CD4-positive, alpha-beta memory T cell (primary cell): ENCODE measurements at regions of chr5 and their contacts with region 1.

Region 1: DNA sequence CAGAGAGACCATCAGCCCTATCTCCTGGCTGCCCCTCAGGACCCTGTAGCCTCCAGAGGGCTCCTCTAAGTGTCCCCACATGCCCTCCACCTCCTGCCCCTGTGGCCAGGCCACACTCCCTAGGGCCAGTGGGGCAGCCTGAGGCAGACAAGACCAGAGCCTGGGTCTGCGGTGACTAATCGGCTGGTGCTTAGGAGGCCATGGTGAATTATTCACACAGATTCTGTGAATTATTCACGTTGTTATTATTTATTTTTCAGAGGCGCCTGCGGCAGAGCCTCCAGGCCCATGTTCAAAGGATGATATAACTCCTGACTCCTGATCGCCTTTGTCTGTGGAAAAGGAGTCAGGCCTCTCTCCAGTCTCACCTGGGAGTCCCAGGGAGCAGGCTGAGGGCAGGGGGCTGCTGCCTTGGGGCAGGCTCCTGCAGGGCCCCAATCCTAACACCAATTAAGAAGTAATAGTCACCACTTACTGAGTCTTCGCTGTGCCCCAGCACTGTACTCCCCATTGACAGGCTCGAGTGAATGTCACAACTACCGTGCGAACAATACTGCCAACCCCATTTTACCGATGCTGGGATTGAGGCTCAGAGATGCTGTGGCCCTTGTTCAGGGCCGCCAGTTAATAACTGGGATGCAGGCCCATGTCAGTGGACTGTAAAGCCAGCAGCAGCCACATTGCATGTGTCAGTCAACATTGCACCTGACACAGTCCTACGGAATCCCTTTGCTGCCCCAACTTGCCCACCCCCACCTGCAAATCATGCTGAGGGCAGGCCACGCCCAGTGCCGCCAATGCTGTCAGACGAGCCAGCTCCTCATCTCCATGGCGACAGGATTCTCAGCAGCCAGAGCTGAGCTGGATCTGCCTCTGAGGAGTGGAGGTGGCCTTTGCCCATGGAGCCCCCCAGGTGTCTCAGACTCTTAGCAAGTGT is 94.9 kb downstream of the PCDH1 start:
- DNase-seq: no peak
- H3K4me3 ChIP-seq: no peak overlapping the region
- H3K4me3 Mint-ChIP-seq: no peak overlapping the region
- H3K27ac ChIP-seq: no peak overlapping the region
- H3K27ac Mint-ChIP-seq: no peak overlapping the region
- H3K4me1 ChIP-seq: no peaks in the 10 kb centered on the region
- H3K4me1 Mint-ChIP-seq: no peaks in the 10 kb centered on the region
- H3K27me3 ChIP-seq: peaks cover 8% of the 10 kb centered on the region
- H3K27me3 Mint-ChIP-seq: peaks cover 3 to 20% of the 10 kb centered on the region in 2 donors

Region 2: GRCh38 chr5:141623186-141623585 is 160.1 kb before region 1 on chr5:
- CTCF ChIA-PET with region 1: no interaction called
- POLR2A ChIA-PET with region 1: no interaction called
- intact Hi-C with region 1: no loop called
- DNase-seq: no peak
- H3K4me3 ChIP-seq: no peak overlapping the region
- H3K4me3 Mint-ChIP-seq: peak overlapping the region in 1 of 8 donors; percentile 54
- H3K27ac ChIP-seq: no peak overlapping the region
- H3K27ac Mint-ChIP-seq: peak overlapping the region in 6 of 7 donors; percentile 53 to 89 (median 71)
- H3K4me1 ChIP-seq: peaks cover 15% of the 10 kb centered on the region
- H3K4me1 Mint-ChIP-seq: peaks cover 11 to 19% (median 18%) of the 10 kb centered on the region in 4 donors
- H3K27me3 ChIP-seq: no peaks in the 10 kb centered on the region
- H3K27me3 Mint-ChIP-seq: no peaks in the 10 kb centered on the region

Region 3: GRCh38 chr5:141771031-141771430 is 12.2 kb before region 1 on chr5:
- CTCF ChIA-PET with region 1: no interaction called
- POLR2A ChIA-PET with region 1: no interaction called
- intact Hi-C with region 1: no loop called
- DNase-seq: no peak
- H3K4me3 ChIP-seq: no peak overlapping the region
- H3K4me3 Mint-ChIP-seq: no peak overlapping the region
- H3K27ac ChIP-seq: no peak overlapping the region
- H3K27ac Mint-ChIP-seq: no peak overlapping the region
- H3K4me1 ChIP-seq: no peaks in the 10 kb centered on the region
- H3K4me1 Mint-ChIP-seq: no peaks in the 10 kb centered on the region
- H3K27me3 ChIP-seq: no peaks in the 10 kb centered on the region
- H3K27me3 Mint-ChIP-seq: peaks cover 4 to 6% of the 10 kb centered on the region in 2 donors

Region 4: DNA sequence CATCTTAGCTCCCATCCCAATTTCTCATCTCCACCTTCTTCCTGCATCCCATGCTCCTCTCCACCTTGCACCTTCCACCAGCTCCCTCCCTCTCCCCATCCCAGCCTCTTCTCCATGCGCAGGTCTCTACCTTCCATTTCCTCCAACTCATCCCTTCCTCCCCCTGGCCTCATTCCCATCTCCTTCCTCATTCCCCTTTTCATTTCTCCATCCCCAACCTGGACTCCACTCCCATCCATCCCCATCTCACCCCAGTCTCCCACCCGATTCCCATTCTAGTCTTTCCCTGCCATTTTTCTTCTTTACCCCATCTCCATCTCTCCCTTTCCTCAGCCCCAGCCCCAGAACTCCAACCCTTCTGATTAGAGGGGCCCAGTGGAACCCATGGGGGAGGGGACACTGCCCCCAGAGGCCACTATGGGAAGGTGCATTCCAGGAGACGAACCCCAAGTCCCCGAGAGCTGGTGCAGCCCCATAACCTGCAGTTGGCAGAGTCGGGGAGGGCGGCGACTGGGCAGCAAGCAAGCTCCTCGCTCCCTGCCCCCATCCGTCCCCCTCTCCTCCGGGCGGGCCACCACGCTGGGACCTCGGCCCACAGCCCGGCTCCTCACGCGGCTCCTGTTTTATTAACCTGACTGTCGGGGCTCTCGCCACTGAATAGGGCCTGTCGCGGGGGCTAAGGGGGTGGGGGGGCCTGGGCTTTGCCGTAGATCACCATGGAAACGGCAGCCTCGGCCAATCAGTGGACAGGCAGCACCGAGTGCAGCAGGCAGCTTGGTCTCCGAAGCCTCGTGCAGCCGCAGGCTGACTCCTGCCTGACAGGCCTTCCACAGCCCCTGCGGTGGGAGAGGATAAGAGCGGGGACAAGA is 28.2 kb after region 1 on chr5:
- CTCF ChIA-PET with region 1: interaction called, 12 read pairs
- POLR2A ChIA-PET with region 1: no interaction called
- intact Hi-C with region 1: no loop called
- DNase-seq: peak in 4 of 5 donors; percentile 4 to 45 (median 17)
- H3K4me3 ChIP-seq: no peak overlapping the region
- H3K4me3 Mint-ChIP-seq: peak overlapping the region in 1 of 8 donors; percentile 26
- H3K27ac ChIP-seq: no peak overlapping the region
- H3K27ac Mint-ChIP-seq: no peak overlapping the region
- H3K4me1 ChIP-seq: no peaks in the 10 kb centered on the region
- H3K4me1 Mint-ChIP-seq: peaks cover 0 to 3% (median under 1%) of the 10 kb centered on the region in 4 donors
- H3K27me3 ChIP-seq: peaks cover 15% of the 10 kb centered on the region
- H3K27me3 Mint-ChIP-seq: peaks cover 30 to 64% of the 10 kb centered on the region in 2 donors